ENCODE measurements at regions of chr16 and their contacts with region 1.

Region 1: GRCh38 chr16:2752035-2752849 is at the start of gene SRRM2:
- DNase-seq: peak; percentile 95
- H3K4me3 Mint-ChIP-seq: peak within 1 kb of the TSS; percentile 89
- H3K27ac Mint-ChIP-seq: peak within 1 kb of the TSS; percentile 99
- H3K4me1 Mint-ChIP-seq: peaks cover 35% of the 10 kb centered on the region
- H3K27me3 Mint-ChIP-seq: no peaks in the 10 kb centered on the region
- CTCF ChIP-seq: no peak
- total RNA-seq, gene SRRM2: 710 and 779 TPM in 2 replicates

Region 2: DNA sequence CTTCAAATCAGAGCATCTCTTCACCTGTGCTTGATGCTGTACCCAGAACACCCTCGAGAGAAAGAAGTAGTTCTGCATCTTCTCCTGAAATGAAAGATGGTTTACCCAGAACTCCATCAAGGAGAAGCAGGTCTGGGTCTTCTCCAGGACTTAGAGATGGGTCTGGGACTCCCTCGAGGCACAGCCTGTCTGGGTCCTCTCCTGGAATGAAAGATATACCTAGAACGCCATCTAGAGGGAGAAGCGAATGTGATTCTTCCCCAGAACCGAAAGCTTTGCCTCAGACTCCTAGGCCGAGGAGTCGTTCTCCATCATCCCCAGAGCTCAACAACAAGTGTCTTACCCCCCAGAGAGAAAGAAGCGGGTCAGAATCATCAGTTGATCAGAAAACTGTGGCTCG is 12.5 kb after region 1 on chr16:
- CTCF ChIA-PET with region 1: interaction called, 15 read pairs
- POLR2A ChIA-PET with region 1: interaction called, 190 read pairs
- intact Hi-C with region 1: loop called (anchors 2 kb)
- DNase-seq: no peak
- H3K4me3 Mint-ChIP-seq: no peak overlapping the region
- H3K27ac Mint-ChIP-seq: no peak overlapping the region
- H3K4me1 Mint-ChIP-seq: peaks cover 31% of the 10 kb centered on the region
- H3K27me3 Mint-ChIP-seq: no peaks in the 10 kb centered on the region
- CTCF ChIP-seq: no peak

Region 3: GRCh38 chr16:2777231-2777902 is 25.1 kb after region 1 on chr16 and contains the start of gene ELOB:
- CTCF ChIA-PET with region 1: interaction called, 3 read pairs
- POLR2A ChIA-PET with region 1: interaction called, 79 read pairs
- intact Hi-C with region 1: no loop called
- DNase-seq: peak; percentile 83
- H3K4me3 Mint-ChIP-seq: peak within 1 kb of the TSS; percentile 96
- H3K27ac Mint-ChIP-seq: peak within 1 kb of the TSS; percentile 96
- H3K4me1 Mint-ChIP-seq: peaks cover 19% of the 10 kb centered on the region
- H3K27me3 Mint-ChIP-seq: no peaks in the 10 kb centered on the region
- CTCF ChIP-seq: no peak
- total RNA-seq, gene ELOB: 438 and 504 TPM in 2 replicates

Region 4: DNA sequence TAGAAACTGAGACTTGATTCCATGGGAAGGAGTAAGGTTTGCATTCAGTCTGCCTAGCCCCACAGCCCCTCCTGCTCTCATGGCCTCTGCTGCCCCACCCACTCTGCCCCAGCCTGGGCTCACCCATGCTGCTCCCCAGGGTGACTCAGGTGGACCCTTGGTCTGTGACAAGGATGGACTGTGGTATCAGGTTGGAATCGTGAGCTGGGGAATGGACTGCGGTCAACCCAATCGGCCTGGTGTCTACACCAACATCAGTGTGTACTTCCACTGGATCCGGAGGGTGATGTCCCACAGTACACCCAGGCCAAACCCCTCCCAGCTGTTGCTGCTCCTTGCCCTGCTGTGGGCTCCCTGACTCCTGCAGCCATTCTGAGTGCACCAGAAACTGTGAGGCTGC is 52.5 kb after region 1 on chr16:
- CTCF ChIA-PET with region 1: no interaction called
- POLR2A ChIA-PET with region 1: no interaction called
- intact Hi-C with region 1: no loop called
- DNase-seq: no peak
- H3K4me3 Mint-ChIP-seq: no peak overlapping the region
- H3K27ac Mint-ChIP-seq: no peak overlapping the region
- H3K4me1 Mint-ChIP-seq: peaks cover 4% of the 10 kb centered on the region
- H3K27me3 Mint-ChIP-seq: peaks cover 32% of the 10 kb centered on the region
- CTCF ChIP-seq: no peak

Region 5: DNA sequence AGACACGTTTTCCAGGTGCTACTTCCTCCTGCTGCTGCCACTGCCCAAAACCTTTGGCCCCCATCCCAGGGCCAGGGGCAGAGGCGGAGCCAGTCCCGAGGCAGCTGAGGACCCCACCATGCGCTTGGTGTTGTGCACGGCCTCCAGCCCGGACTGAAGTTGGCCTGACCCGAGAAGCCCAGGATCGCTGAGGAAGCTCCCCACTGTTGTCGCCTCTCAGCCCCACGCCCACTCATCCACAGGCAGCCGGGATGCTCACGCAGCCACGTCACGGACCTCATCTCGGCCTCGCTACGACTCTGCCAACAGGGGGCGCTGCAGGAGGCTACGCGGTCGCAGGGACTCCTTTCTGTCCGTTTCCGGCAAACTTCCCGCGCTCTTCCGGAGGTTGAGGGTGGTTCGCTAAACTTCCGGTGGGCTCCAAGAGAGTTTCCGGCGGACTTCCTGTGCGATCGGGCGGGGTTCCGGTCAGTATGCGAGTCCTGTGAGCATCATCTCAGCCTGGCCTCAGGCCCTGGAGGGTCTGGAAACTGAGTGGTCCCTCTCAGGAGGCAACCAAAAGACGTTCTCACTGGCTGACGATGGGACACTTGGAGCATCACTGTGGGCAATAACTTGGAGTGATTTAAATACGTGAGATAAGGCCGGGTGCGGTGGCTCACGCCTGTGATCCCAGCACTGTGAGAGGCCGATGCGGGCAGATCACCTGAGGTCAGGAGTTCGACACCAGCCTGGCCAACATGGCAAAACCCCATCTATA is 90.3 kb after region 1 on chr16:
- CTCF ChIA-PET with region 1: no interaction called
- POLR2A ChIA-PET with region 1: no interaction called
- intact Hi-C with region 1: no loop called
- DNase-seq: no peak
- H3K4me3 Mint-ChIP-seq: no peak overlapping the region
- H3K27ac Mint-ChIP-seq: no peak overlapping the region
- H3K4me1 Mint-ChIP-seq: peaks cover 13% of the 10 kb centered on the region
- H3K27me3 Mint-ChIP-seq: no peaks in the 10 kb centered on the region
- CTCF ChIP-seq: peak; percentile 40

Region 6: GRCh38 chr16:2883027-2883851 is 131.0 kb after region 1 on chr16 and contains the start of gene FLYWCH2:
- CTCF ChIA-PET with region 1: no interaction called
- POLR2A ChIA-PET with region 1: interaction called, 13 read pairs
- intact Hi-C with region 1: no loop called
- DNase-seq: peak; percentile 96
- H3K4me3 Mint-ChIP-seq: peak within 1 kb of the TSS; percentile 77
- H3K27ac Mint-ChIP-seq: peak within 1 kb of the TSS; percentile 73
- H3K4me1 Mint-ChIP-seq: peaks cover 5% of the 10 kb centered on the region
- H3K27me3 Mint-ChIP-seq: no peaks in the 10 kb centered on the region
- CTCF ChIP-seq: no peak
- total RNA-seq, gene FLYWCH2: 24.4 and 27.7 TPM in 2 replicates

Measured in MCF 10A (cell line).